Aorta (tissue), 5 donors: ENCODE measurements at regions of chr4 and their contacts with region 1.

Region 1: GRCh38 chr4:87530868-87531267 is 1.7 kb upstream of the SPARCL1 start:
- DNase-seq: peak in 1 of 2 donors; percentile 65
- ATAC-seq: peak; percentile 79
- H3K4me3 ChIP-seq: peak overlapping the region in 1 of 2 donors; percentile 48
- H3K27ac ChIP-seq: peak overlapping the region; percentile 69 to 97
- H3K4me1 ChIP-seq: peaks cover 1 to 10% of the 10 kb centered on the region in 2 donors
- H3K27me3 ChIP-seq: no peaks in the 10 kb centered on the region

Region 2: GRCh38 chr4:87209696-87210095 is 321.2 kb before region 1 on chr4:
- intact Hi-C with region 1: no loop called
- DNase-seq: peak in 1 of 2 donors; percentile 80
- ATAC-seq: no peak
- H3K4me3 ChIP-seq: no peak overlapping the region
- H3K27ac ChIP-seq: no peak overlapping the region
- H3K4me1 ChIP-seq: no peaks in the 10 kb centered on the region
- H3K27me3 ChIP-seq: no peaks in the 10 kb centered on the region

Region 3: DNA sequence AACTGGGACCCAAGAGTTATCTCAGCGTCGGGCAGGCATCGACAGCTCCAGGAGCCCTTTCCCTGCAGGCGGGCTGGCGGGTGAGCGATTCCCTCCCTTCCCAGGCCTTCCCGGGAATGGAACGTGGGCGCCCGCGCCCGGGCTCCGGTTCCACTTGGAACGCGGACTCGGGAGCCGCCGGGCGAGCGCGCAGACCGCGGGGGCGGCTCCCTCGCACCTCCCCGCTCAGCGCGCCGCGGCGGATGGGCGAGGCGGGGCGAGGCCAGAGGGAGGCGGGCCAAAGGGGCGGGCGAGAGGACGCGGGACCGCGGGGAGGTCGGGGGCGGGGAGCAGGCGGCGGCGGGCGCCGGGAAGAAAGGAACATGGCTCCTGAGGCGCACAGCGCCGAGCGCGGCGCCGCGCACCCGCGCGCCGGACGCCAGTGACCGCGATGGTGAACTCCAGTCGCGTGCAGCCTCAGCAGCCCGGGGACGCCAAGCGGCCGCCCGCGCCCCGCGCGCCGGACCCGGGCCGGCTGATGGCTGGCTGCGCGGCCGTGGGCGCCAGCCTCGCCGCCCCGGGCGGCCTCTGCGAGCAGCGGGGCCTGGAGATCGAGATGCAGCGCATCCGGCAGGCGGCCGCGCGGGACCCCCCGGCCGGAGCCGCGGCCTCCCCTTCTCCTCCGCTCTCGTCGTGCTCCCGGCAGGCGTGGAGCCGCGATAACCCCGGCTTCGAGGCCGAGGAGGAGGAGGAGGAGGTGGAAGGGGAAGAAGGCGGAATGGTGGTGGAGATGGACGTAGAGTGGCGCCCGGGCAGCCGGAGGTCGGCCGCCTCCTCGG is 476.6 kb after region 1 on chr4 and contains the start of gene PKD2:
- intact Hi-C with region 1: loop called (anchors 10 kb)
- DNase-seq: peak; percentile 94 to 98
- ATAC-seq: peak; percentile 92
- H3K4me3 ChIP-seq: peak within 1 kb of the TSS; percentile 99 to 100
- H3K27ac ChIP-seq: peak within 1 kb of the TSS; percentile 100
- H3K4me1 ChIP-seq: peaks cover 4% of the 10 kb centered on the region in 2 donors
- H3K27me3 ChIP-seq: no peaks in the 10 kb centered on the region
- total RNA-seq, gene PKD2: 132 to 311 TPM